Aorta (tissue), 5 donors: ENCODE measurements at regions of chr3 and their contacts with region 1.

Region 1: DNA sequence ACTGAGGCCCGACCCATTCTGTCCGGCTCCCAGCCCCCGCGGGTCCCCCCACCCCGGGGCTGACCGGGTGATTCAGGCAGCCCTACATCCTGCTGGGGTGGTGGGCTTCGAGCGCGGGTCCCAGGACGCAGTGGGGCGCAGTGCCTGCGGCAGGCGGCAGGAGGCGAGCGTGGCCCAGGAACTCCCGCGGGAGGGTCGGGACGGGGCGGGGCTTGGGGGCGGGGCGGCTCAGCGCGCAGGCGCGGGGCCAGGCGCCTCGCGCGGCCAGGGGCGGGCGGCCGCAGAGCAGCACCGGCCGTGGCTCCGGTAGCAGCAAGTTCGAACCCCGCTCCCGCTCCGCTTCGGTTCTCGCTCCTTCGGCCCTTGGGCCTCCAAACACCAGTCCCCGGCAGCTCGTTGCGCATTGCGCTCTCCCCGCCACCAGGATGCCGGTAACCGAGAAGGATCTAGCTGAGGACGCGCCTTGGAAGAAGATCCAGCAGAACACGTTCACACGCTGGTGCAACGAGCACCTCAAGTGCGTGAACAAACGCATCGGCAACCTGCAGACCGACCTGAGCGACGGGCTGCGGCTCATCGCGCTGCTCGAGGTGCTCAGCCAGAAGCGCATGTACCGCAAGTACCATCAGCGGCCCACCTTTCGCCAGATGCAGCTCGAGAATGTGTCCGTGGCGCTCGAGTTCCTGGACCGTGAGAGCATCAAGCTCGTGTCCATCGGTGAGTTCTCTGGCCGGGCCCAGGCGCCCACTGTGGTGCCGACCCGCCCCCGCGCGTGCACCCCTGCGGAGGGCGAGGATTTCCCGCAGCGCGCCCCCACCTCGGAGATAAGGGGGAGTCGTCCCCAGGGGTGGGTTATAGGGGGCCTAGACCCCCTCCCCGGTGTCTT is at the start of gene FLNB:
- DNase-seq: peak; percentile 78 to 93
- ATAC-seq: peak; percentile 92
- H3K4me3 ChIP-seq: peak within 1 kb of the TSS; percentile 54 to 79
- H3K27ac ChIP-seq: peak within 1 kb of the TSS in 1 of 2 donors; percentile 46
- H3K4me1 ChIP-seq: peaks cover 0 to 1% of the 10 kb centered on the region in 2 donors
- H3K27me3 ChIP-seq: no peaks in the 10 kb centered on the region
- total RNA-seq, gene FLNB: 157 to 254 TPM

Region 2: DNA sequence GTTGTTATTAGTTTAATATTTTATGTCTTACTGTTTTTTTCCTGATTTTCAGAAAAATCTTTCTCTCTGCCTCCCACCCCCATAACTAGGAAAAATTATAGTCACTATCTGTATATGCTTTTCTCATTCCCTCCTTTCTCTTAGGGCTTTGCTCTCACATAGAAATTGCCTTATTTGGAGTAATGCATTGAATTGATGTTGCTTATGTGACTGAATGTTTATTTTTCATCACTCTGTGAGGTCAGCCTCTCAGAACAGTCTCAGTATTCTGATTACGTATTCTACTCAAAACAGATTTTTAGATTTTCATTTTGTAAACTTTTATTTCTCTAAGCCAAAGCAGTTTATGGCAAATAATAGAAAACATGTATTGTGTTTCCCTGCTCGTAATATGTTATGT is 131.3 kb before region 1 on chr3:
- intact Hi-C with region 1: loop called in 1 of 2 experiments (anchors 5 kb)
- DNase-seq: no peak
- ATAC-seq: no peak
- H3K4me3 ChIP-seq: no peak overlapping the region
- H3K27ac ChIP-seq: peak overlapping the region in 1 of 2 donors; percentile 87
- H3K4me1 ChIP-seq: no peaks in the 10 kb centered on the region
- H3K27me3 ChIP-seq: no peaks in the 10 kb centered on the region

Region 3: DNA sequence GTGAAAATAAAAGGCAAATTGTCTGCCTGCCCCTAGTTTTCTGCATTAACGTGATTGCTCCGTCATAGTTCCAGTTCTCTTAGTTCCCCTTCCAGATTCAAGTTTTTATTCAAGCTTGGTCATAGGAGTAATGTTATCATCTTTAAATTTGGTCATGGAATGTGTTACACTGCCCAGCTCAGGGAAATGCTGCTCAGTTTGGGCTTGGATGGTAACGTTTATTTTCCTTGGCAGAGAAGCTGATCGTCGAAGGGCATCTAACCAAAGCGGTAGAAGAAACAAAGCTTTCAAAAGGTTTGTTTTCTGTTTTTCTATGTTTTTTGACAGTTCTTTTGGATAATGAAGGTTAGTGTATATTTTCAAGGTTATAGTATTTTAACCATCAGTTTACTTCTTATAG is 118.6 kb before region 1 on chr3:
- intact Hi-C with region 1: loop called (anchors 5 to 10 kb)
- DNase-seq: no peak
- ATAC-seq: peak; percentile 88
- H3K4me3 ChIP-seq: peak overlapping the region in 1 of 2 donors; percentile 54
- H3K27ac ChIP-seq: no peak overlapping the region
- H3K4me1 ChIP-seq: peaks cover 0 to 2% of the 10 kb centered on the region in 2 donors
- H3K27me3 ChIP-seq: no peaks in the 10 kb centered on the region

Region 4: DNA sequence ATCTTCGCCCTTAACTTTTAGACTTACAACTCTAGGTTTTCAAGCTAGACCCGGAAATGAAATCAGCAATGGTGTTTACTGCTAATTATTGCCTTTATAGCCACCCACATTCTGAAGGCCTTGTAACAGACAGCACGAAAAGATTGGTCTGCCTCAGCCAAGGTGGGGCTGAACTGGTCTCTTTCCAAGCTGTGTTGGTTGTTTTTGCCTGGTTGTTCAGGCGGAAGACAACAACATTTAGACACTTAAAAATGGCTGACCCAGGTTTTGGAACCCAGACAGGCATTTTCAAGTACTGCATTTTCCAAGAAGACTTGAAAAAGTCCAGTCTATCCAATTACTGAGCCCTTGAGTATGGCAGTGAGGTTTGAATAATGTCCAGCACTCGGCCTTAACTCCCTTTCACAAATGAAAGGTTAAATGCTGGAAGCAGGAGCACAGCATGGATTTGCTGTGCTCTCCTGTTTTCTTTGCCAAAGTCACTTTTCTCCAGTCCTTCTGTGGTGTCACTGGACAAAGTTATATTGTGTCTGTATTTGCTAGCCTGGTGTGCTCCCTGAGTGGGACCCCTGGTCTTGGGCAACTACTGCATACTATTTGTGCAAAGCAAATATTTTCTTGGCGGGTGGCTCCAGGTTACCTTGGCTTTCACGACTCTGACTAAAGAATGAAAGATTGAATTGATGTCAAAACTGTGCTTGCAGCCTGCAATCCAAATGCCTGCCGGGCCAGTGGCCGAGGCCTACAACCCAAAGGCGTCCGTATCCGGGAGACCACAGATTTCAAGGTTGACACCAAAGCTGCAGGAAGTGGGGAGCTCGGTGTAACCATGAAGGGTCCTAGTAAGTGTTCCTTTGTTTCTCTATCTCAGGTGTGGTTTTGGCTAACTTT is 93.4 kb after region 1 on chr3:
- intact Hi-C with region 1: loop called (anchors 5 to 10 kb)
- DNase-seq: no peak
- ATAC-seq: peak; percentile 33
- H3K4me3 ChIP-seq: no peak overlapping the region
- H3K27ac ChIP-seq: peak overlapping the region; percentile 34 to 85
- H3K4me1 ChIP-seq: peaks cover 2 to 6% of the 10 kb centered on the region in 2 donors
- H3K27me3 ChIP-seq: no peaks in the 10 kb centered on the region

Region 5: GRCh38 chr3:58116161-58116955 is 108.0 kb after region 1 on chr3:
- intact Hi-C with region 1: loop called in 1 of 2 experiments (anchors 5 kb)
- DNase-seq: no peak
- ATAC-seq: no peak
- H3K4me3 ChIP-seq: no peak overlapping the region
- H3K27ac ChIP-seq: no peak overlapping the region
- H3K4me1 ChIP-seq: peaks cover 5 to 6% of the 10 kb centered on the region in 2 donors
- H3K27me3 ChIP-seq: no peaks in the 10 kb centered on the region

Region 6: GRCh38 chr3:58161435-58162398 is 153.3 kb after region 1 on chr3:
- intact Hi-C with region 1: loop called in 1 of 2 experiments (anchors 2 kb)
- DNase-seq: peak; percentile 92
- ATAC-seq: peak; percentile 61
- H3K4me3 ChIP-seq: no peak overlapping the region
- H3K27ac ChIP-seq: peak overlapping the region in 1 of 2 donors; percentile 67
- H3K4me1 ChIP-seq: peaks cover 0 to 6% of the 10 kb centered on the region in 2 donors
- H3K27me3 ChIP-seq: no peaks in the 10 kb centered on the region

Region 7: DNA sequence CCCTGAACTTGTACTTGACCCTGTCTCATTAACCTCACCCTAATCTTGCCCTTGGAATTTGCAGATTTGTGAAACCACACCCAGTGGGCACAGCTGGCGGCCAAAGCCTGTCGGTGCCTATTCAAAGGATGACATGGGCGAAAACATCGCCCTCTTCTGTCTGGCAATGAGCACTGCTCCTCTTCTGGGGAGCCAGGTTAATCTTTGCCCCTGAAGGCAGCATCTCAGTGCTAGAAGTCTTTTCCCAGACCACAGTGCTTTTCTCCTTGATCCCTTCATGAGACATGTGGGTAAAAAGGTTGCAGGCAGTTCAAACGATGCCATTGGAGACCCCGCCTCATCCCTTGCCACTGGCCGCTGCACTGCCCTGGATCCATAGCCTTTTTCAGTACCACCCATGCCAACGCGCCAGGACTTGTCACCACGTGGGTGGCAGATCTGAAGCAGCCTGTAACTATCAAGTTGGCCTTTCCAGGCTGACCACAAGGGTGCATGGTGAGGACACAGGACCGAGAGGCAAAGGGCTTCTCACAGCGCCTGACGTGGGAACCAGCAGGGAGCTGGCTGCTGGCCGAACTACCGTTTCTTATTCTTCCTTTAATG is 208.9 kb after region 1 on chr3:
- intact Hi-C with region 1: loop called in 1 of 2 experiments (anchors 2 kb)
- DNase-seq: peak; percentile 86 to 90
- ATAC-seq: peak; percentile 81
- H3K4me3 ChIP-seq: no peak overlapping the region
- H3K27ac ChIP-seq: no peak overlapping the region
- H3K4me1 ChIP-seq: no peaks in the 10 kb centered on the region
- H3K27me3 ChIP-seq: no peaks in the 10 kb centered on the region